GM12878 (cell line): ENCODE measurements at regions of chr17 and their contacts with region 1.

Region 1: GRCh38 chr17:40846515-40847155 is 20.4 kb downstream of the KRT12 start:
- DNase-seq: no peak
- ATAC-seq: no peak
- H3K4me3 ChIP-seq: no peak overlapping the region
- H3K27ac ChIP-seq: no peak overlapping the region
- H3K4me1 ChIP-seq: no peaks in the 10 kb centered on the region
- H3K27me3 ChIP-seq: no peaks in the 10 kb centered on the region; a peak in 1 of 4 replicates
- CTCF ChIP-seq: no peak
- EP300 ChIP-seq: no peak
- POLR2A ChIP-seq: no peak
- RAD21 ChIP-seq: no peak

Region 2: GRCh38 chr17:40857535-40857934 is 10.9 kb after region 1 on chr17:
- CTCF ChIA-PET with region 1: interaction called, 7 read pairs
- POLR2A ChIA-PET with region 1: no interaction called
- RAD21 ChIA-PET with region 1: interaction called, 5 read pairs
- SMC1A ChIA-PET with region 1: interaction called, 11 read pairs
- in situ Hi-C with region 1: no loop called
- intact Hi-C with region 1: no loop called
- DNase-seq: no peak
- ATAC-seq: no peak
- H3K4me3 ChIP-seq: no peak overlapping the region
- H3K27ac ChIP-seq: no peak overlapping the region
- H3K4me1 ChIP-seq: no peaks in the 10 kb centered on the region
- H3K27me3 ChIP-seq: peaks cover 0 to 4% of the 10 kb centered on the region in 2 experiments; a peak in 3 of 4 replicates
- CTCF ChIP-seq: no peak
- EP300 ChIP-seq: no peak
- POLR2A ChIP-seq: no peak
- RAD21 ChIP-seq: no peak